Endothelial cell of umbilical vein (primary cell): ENCODE measurements at regions of chr7 and their contacts with region 1.

Region 1: DNA sequence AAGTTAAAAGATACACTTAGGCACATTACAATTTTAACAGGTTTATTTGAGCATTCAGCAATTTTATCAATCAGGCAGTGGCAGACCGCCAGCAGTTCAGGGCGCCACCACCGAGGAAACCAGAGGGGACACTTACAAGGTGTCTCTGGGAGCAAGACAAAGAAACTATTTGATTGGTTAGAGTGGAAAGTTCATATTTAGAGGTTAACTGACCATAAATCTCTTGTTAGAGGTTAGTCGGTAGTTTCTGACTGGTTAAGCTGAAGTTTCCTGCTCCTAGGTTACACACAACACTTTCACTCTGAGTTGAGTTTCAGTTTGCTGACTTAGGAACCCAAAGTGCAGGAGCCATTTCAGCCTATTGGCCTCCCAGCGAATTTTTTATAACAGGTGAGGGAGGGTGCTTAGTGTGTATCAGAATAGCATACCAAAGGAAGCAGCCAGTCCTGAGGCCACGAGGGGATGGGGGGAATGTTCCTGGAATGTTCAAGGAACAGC is 10.8 kb upstream of the PVRIG start:
- DNase-seq: no peak
- H3K4me3 ChIP-seq: no peak overlapping the region
- H3K27ac ChIP-seq: no peak overlapping the region
- H3K4me1 ChIP-seq: no peaks in the 10 kb centered on the region
- H3K27me3 ChIP-seq: peaks cover 14 to 25% of the 10 kb centered on the region in 2 experiments
- CTCF ChIP-seq: no peak
- POLR2A ChIP-seq: no peak

Region 2: GRCh38 chr7:100190048-100190711 is 18.8 kb before region 1 on chr7:
- CTCF ChIA-PET with region 1: interaction called, 13 read pairs
- POLR2A ChIA-PET with region 1: no interaction called
- dilution Hi-C with region 1: no loop called
- intact Hi-C with region 1: no loop called
- DNase-seq: no peak
- H3K4me3 ChIP-seq: no peak overlapping the region
- H3K27ac ChIP-seq: no peak overlapping the region
- H3K4me1 ChIP-seq: no peaks in the 10 kb centered on the region
- H3K27me3 ChIP-seq: peaks cover 3 to 9% of the 10 kb centered on the region in 2 experiments
- CTCF ChIP-seq: peak in 1 of 2 donors; percentile 14
- POLR2A ChIP-seq: no peak

Region 3: GRCh38 chr7:100247152-100247757 is 38.3 kb after region 1 on chr7:
- CTCF ChIA-PET with region 1: no interaction called
- POLR2A ChIA-PET with region 1: interaction called, 13 read pairs
- dilution Hi-C with region 1: no loop called
- intact Hi-C with region 1: no loop called
- DNase-seq: peak; percentile 3
- H3K4me3 ChIP-seq: no peak overlapping the region
- H3K27ac ChIP-seq: no peak overlapping the region
- H3K4me1 ChIP-seq: no peaks in the 10 kb centered on the region
- H3K27me3 ChIP-seq: no peaks in the 10 kb centered on the region
- CTCF ChIP-seq: no peak
- POLR2A ChIP-seq: no peak